Thyroid gland (tissue), 4 donors: ENCODE measurements at regions of chr17 and their contacts with region 1.

Region 1: DNA sequence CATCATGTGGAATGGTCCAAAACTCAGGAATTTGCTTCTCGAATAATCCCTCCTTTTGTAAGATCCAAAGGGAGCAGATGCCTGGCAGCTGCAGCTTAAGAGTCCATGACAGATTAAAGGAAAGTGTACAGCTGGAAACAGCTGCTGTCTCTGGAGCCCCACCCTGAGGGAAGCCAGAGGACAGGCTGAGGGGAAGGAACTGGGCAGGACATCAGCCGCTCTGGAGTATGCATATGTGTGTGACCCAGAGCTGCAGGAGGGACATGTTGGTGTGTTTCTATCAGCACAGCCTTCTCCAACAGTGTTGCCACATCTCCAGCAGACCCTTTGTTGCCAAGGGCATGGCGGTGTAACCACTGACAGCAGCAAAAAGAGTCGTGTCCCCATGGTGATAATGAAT is 46.2 kb downstream of the CYB561 start:
- DNase-seq: peak in 1 of 2 donors; percentile 4
- H3K4me3 ChIP-seq: no peak overlapping the region
- H3K27ac ChIP-seq: no peak overlapping the region
- H3K4me1 ChIP-seq: no peaks in the 10 kb centered on the region
- H3K27me3 ChIP-seq: no peaks in the 10 kb centered on the region
- CTCF ChIP-seq: no peak
- POLR2A ChIP-seq: no peak

Region 2: GRCh38 chr17:63001451-63002312 is 398.2 kb before region 1 on chr17:
- intact Hi-C with region 1: loop called (anchors 5 kb)
- DNase-seq: no peak
- H3K4me3 ChIP-seq: no peak overlapping the region
- H3K27ac ChIP-seq: no peak overlapping the region
- H3K4me1 ChIP-seq: no peaks in the 10 kb centered on the region
- H3K27me3 ChIP-seq: no peaks in the 10 kb centered on the region
- CTCF ChIP-seq: no peak
- POLR2A ChIP-seq: no peak

Region 3: DNA sequence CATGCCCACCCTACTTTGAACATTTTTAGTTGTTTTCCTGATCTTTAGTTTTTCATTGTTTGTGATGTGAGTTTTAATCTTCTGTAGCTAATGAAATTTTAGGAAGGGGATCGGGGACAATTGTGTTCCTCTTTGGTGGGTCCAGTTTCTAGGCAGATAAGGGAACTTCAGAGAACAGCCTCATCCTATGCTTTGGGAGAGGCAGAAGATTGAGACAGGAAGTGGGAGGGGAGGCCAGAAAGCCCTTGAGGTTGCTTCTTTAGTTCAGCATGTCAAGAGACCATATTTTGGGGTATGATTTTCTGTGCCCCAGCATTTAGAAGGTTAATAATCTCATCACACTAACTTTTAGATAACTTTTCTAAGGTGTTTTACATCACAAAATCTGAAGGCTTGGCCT is 242.9 kb before region 1 on chr17:
- intact Hi-C with region 1: no loop called
- DNase-seq: no peak
- H3K4me3 ChIP-seq: no peak overlapping the region
- H3K27ac ChIP-seq: no peak overlapping the region
- H3K4me1 ChIP-seq: no peaks in the 10 kb centered on the region
- H3K27me3 ChIP-seq: no peaks in the 10 kb centered on the region
- CTCF ChIP-seq: no peak
- POLR2A ChIP-seq: no peak

Region 4: DNA sequence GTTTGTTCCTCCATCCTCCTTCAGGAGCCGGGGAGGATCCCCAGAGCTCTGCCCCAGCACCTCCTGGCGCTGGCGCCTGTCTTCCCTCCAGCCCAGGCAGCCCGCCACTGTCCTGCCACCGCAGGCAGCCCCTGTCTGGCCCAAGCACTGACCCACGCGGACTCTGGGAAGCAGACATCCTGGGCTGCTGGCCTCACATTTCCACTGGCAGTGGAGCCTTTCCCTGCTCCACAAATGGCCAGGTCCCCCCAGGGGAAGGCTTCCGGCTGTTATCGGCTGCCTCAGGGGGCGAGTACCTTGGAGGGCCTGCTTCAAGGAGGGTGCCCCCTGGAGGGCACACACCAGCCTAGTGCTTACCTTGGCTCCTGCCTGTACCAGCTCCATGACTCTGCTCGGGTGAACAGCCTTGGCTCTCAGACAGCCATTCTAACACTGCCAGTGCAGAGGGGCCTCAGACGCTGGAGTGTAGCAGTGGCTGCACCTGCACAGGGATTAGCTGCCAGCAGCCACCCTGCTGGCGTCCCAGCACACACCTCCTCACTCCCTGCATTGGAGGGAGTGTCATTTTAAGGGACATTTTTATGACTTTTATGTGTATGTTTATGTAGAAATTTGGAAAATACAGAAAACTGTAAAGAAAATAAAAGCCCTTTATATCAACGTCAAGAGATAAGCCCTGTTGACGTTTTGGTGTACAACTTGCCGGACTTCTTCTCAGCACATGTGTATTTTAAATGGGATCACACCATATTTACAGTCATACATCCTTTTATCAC is 98.0 kb after region 1 on chr17:
- intact Hi-C with region 1: no loop called
- DNase-seq: peak; percentile 23 to 47
- H3K4me3 ChIP-seq: no peak overlapping the region
- H3K27ac ChIP-seq: no peak overlapping the region
- H3K4me1 ChIP-seq: no peaks in the 10 kb centered on the region
- H3K27me3 ChIP-seq: no peaks in the 10 kb centered on the region
- CTCF ChIP-seq: peak in 1 of 6 experiments; percentile 17
- POLR2A ChIP-seq: no peak